Tibial artery (tissue), 4 donors: ENCODE measurements at regions of chr9 and their contacts with region 1.

Region 1: DNA sequence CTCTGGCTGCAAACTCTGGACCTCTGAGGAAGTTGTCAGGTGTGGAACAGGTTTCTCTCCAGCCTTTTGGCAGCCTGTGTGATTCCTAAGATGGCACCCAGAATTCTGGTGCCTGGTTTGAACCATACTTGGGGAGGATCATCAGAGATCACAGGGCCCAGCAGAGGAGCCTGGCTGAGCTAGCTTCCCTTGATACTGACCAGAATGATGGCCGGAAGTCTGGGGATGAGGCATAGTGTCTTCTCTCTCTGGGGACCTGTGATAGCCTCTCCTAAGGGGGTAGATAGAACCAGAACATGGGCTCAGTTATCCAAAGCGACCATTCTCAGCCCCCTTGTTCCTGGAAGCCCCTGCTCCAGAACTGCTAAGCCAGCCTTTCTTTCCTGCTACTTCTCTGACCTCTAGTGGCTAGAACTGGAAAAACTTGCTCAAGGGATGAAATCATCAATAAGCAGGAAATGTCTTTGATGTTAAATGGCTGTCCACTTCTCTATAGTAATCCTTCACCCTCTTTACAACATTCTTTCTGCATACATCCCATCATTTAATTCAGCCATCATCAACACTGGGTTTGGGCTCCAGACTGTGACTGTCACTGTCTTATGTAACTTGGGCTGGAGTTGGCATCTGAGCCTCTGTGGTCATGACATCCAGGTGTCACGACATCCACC is 55.1 kb downstream of the C9orf152 start:
- DNase-seq: no peak
- H3K4me3 ChIP-seq: no peak overlapping the region
- H3K27ac ChIP-seq: peak overlapping the region; percentile 14 to 24
- H3K4me1 ChIP-seq: peaks cover 4 to 82% (median 42%) of the 10 kb centered on the region in 4 donors
- H3K27me3 ChIP-seq: no peaks in the 10 kb centered on the region
- CTCF ChIP-seq: peak; percentile 62 to 72

Region 2: DNA sequence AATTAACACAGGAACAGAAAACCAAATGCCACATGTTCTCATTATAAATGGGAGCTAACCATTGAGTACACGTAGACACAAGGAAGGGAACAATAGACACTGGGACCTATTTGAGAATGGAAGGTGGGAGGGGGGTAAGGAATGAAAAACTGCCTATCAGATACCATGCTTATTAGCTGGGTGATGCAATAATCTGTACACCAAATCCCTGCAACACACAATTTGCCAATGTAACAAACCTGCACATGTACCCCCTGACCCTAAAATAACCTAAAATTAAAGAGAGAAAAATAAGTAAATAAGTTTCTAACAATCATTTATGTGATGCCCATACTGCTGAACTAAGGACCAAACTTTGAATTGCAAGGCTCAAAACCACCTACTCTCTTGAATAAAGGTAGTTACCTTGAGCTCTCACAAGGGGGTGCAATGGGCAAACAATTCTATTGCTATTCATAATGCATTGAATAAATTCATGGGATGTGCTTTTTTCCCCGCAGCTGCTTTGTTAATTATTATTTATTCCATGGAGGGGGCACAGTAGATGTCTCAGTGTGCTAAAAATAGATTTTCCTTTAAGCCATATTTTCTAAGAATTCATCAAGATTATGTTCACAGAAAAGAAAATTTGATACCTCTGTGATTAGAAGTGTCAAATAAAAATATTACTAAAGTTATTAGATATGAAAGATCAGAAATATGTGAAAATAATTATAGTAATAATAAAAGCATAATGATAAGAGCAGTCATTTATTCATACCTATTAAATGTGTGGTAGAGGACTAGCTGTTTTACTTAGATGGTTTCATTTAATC is 578.6 kb before region 1 on chr9:
- intact Hi-C with region 1: loop called (anchors 5 kb)
- DNase-seq: no peak
- H3K4me3 ChIP-seq: no peak overlapping the region
- H3K27ac ChIP-seq: no peak overlapping the region
- H3K4me1 ChIP-seq: no peaks in the 10 kb centered on the region
- H3K27me3 ChIP-seq: no peaks in the 10 kb centered on the region
- CTCF ChIP-seq: peak; percentile 70 to 88

Region 3: GRCh38 chr9:109843641-109844040 is 309.2 kb before region 1 on chr9:
- intact Hi-C with region 1: no loop called
- DNase-seq: peak in 1 of 2 donors; percentile 26
- H3K4me3 ChIP-seq: no peak overlapping the region
- H3K27ac ChIP-seq: no peak overlapping the region
- H3K4me1 ChIP-seq: peaks cover 0 to 12% (median 7%) of the 10 kb centered on the region in 4 donors
- H3K27me3 ChIP-seq: no peaks in the 10 kb centered on the region
- CTCF ChIP-seq: no peak

Region 4: GRCh38 chr9:109903515-109904138 is 249.2 kb before region 1 on chr9:
- intact Hi-C with region 1: loop called (anchors 2 kb)
- DNase-seq: peak; percentile 64 to 70
- H3K4me3 ChIP-seq: no peak overlapping the region
- H3K27ac ChIP-seq: no peak overlapping the region
- H3K4me1 ChIP-seq: peaks cover 0 to 5% (median 0%) of the 10 kb centered on the region in 4 donors
- H3K27me3 ChIP-seq: no peaks in the 10 kb centered on the region
- CTCF ChIP-seq: peak; percentile 76 to 79

Region 5: DNA sequence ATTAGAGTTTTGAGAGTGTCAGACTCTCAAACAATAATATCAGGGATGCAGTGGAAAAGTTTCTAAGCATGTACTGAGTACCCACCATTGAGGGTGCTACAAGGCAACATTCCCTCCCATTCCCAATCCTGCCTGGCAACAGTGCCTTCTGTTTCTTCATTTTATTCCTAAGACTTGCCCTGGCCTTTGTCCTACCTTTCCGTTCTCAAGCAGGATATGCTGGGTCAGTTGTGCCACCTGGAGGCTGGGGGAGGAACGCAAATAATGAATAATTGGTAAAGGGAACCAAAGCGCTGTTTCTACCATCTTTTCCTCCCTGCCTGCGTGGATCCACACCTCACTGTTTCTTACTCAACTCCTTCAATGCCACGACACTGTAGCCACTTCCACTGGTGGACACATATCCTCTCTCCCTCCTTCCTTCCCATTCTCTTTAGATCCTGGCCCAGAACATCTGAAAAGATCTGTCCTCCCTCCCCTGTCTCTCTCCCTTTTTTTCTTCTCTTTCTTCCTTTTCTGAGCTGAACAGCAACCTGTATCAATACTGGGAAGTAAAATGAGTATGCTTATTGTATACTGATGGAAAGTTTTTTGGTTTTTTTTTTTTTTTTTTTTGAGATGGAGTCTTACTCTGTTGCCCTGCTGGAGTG is 94.4 kb before region 1 on chr9:
- intact Hi-C with region 1: loop called (anchors 10 kb)
- DNase-seq: no peak
- H3K4me3 ChIP-seq: no peak overlapping the region
- H3K27ac ChIP-seq: no peak overlapping the region
- H3K4me1 ChIP-seq: peaks cover 0 to 23% (median 4%) of the 10 kb centered on the region in 4 donors
- H3K27me3 ChIP-seq: no peaks in the 10 kb centered on the region
- CTCF ChIP-seq: peak; percentile 28 to 35

Region 6: GRCh38 chr9:110217656-110218099 is 64.8 kb after region 1 on chr9:
- intact Hi-C with region 1: loop called (anchors 10 kb)
- DNase-seq: no peak
- H3K4me3 ChIP-seq: no peak overlapping the region
- H3K27ac ChIP-seq: no peak overlapping the region
- H3K4me1 ChIP-seq: no peaks in the 10 kb centered on the region
- H3K27me3 ChIP-seq: no peaks in the 10 kb centered on the region
- CTCF ChIP-seq: peak; percentile 71 to 76